Mammary epithelial cell (primary cell): ENCODE measurements at regions of chr19 and their contacts with region 1.

Region 1: DNA sequence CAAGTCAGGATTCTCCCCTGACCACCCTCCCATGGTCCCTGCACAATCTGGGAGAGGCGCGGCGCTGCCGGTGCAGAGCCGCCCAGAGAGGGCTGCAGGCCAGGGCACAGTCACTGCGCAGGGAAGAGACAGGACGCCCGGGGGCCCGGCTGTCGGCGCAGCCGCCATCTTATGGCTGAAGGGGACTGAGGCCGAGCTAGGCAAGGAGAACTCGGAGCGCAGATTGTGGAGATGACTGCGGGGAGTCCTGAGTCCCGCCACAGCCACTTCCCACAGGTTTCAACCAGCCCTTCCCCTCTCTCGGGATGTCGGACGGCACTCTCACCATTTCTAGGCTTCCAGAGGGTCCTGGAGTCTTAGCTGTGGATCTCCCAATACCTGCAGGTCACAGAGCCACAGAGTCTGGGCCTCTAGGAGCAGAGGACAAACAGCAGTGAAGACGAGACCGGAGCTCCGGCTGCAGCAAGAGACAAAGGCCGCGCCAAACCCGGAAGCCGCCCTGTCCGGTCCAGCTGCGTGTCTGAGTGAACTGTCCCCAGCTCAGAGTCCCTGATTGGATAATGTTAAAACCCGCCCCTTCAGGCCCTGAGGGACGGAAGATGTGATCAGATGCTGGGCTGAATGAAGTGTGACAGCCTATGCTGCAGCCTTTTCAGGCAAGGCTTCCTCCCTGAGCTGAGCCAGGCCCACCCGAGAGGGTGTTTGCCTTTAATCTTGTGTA is at the start of gene ZNF708:
- DNase-seq: peak; percentile 90
- H3K4me3 ChIP-seq: peak within 1 kb of the TSS; percentile 62 to 87 (median 81)
- H3K27ac ChIP-seq: peak within 1 kb of the TSS; percentile 86
- H3K4me1 ChIP-seq: peaks cover 5% of the 10 kb centered on the region
- H3K27me3 ChIP-seq: no peaks in the 10 kb centered on the region
- CTCF ChIP-seq: no peak
- total RNA-seq, gene ZNF708: 9.2 to 15.3 TPM

Region 2: DNA sequence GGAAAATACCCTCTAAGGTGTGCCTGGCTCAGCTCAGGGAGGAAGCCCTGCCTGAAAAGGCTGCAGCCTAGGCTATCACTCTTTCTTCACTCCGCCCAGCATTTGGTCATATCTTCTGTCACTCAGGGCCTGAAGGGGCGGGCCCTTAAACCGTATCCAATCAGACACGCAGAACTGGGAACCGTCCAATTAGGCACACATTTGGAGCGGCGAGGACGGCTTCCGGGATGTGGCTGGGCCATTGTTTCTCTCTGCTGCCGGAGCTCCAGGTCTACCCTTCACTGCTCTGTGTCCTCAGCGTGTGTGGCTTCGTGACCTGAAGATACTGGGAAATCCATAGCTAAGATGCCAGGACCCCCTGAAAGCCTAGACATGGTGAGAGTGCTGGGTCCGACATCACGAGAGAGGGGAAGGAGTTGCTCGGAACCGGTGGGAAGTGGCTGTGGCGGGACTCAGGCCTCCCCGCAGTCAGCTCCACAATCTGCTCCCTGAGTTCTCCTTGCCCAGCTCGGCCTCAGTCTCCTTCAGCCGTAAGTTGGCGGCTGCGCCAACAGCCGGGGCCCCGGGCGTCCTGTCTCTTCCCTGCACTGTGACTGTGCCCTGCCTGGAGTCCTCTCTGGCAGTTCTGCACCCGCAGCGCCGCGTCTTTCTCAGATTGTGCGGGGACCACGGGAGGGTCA is 68.0 kb after region 1 on chr19 and contains the start of gene ZNF493:
- CTCF ChIA-PET with region 1: no interaction called
- dilution Hi-C with region 1: no loop called
- in situ Hi-C with region 1: no loop called
- intact Hi-C with region 1: loop called (anchors 5 kb)
- DNase-seq: peak; percentile 95
- H3K4me3 ChIP-seq: peak within 1 kb of the TSS; percentile 64 to 92 (median 79)
- H3K27ac ChIP-seq: peak within 1 kb of the TSS; percentile 50
- H3K4me1 ChIP-seq: no peaks in the 10 kb centered on the region
- H3K27me3 ChIP-seq: no peaks in the 10 kb centered on the region
- CTCF ChIP-seq: no peak
- total RNA-seq, gene ZNF493: 9.6 to 26.0 TPM

Region 3: GRCh38 chr19:21767065-21767800 is 438.2 kb after region 1 on chr19 and contains the start of gene ZNF100:
- CTCF ChIA-PET with region 1: no interaction called
- dilution Hi-C with region 1: no loop called
- in situ Hi-C with region 1: no loop called
- intact Hi-C with region 1: loop called (anchors 10 kb)
- DNase-seq: peak; percentile 88
- H3K4me3 ChIP-seq: peak within 1 kb of the TSS; percentile 74 to 82 (median 80)
- H3K27ac ChIP-seq: peak within 1 kb of the TSS; percentile 73
- H3K4me1 ChIP-seq: no peaks in the 10 kb centered on the region
- H3K27me3 ChIP-seq: no peaks in the 10 kb centered on the region
- CTCF ChIP-seq: no peak
- total RNA-seq, gene ZNF100: 7.4 to 11.8 TPM